ENCODE measurements at regions of chr17 and their contacts with region 1.

Region 1: GRCh38 chr17:70767102-70767701 is 597.9 kb downstream of the KCNJ2 start:
- DNase-seq: no peak
- ATAC-seq: no peak
- H3K4me3 Mint-ChIP-seq: no peak overlapping the region
- H3K27ac Mint-ChIP-seq: no peak overlapping the region
- H3K4me1 Mint-ChIP-seq: peaks cover 4% of the 10 kb centered on the region
- H3K27me3 Mint-ChIP-seq: no peaks in the 10 kb centered on the region
- CTCF ChIP-seq: peak; percentile 72

Region 2: GRCh38 chr17:71055128-71055527 is 287.9 kb after region 1 on chr17:
- CTCF ChIA-PET with region 1: interaction called, 10 read pairs
- POLR2A ChIA-PET with region 1: no interaction called
- DNase-seq: no peak
- ATAC-seq: no peak
- H3K4me3 Mint-ChIP-seq: no peak overlapping the region
- H3K27ac Mint-ChIP-seq: no peak overlapping the region
- H3K4me1 Mint-ChIP-seq: no peaks in the 10 kb centered on the region
- H3K27me3 Mint-ChIP-seq: peaks cover 6% of the 10 kb centered on the region
- CTCF ChIP-seq: no peak

Region 3: GRCh38 chr17:71084219-71084618 is 317.0 kb after region 1 on chr17:
- CTCF ChIA-PET with region 1: interaction called, 32 read pairs
- POLR2A ChIA-PET with region 1: no interaction called
- DNase-seq: peak; percentile 72
- ATAC-seq: peak; percentile 55
- H3K4me3 Mint-ChIP-seq: no peak overlapping the region
- H3K27ac Mint-ChIP-seq: no peak overlapping the region
- H3K4me1 Mint-ChIP-seq: peaks cover 43% of the 10 kb centered on the region
- H3K27me3 Mint-ChIP-seq: peaks cover 2% of the 10 kb centered on the region; the same call in 1 of the 2 replicates
- CTCF ChIP-seq: peak; percentile 53

Measured in WTC11 (cell line).